Activated CD8-positive, alpha-beta T cell treated with anti-CD3 and anti-CD28 coated beads for 36 hours (primary cell): ENCODE measurements at regions of chrX and their contacts with region 1.

Region 1: GRCh38 chrX:43958529-43958928 is 14.7 kb downstream of the NDP start:
- DNase-seq: peak; percentile 5
- ATAC-seq: peak; percentile 47
- H3K4me3 Mint-ChIP-seq: no peak overlapping the region
- H3K27ac Mint-ChIP-seq: no peak overlapping the region
- H3K4me1 Mint-ChIP-seq: no peaks in the 10 kb centered on the region
- H3K27me3 Mint-ChIP-seq: peaks cover 1% of the 10 kb centered on the region
- CTCF ChIP-seq: peak; percentile 63

Region 2: GRCh38 chrX:43870758-43871419 is 87.6 kb before region 1 on chrX:
- CTCF ChIA-PET with region 1: no interaction called
- POLR2A ChIA-PET with region 1: no interaction called
- intact Hi-C with region 1: no loop called
- DNase-seq: peak; percentile 4
- ATAC-seq: no peak
- H3K4me3 Mint-ChIP-seq: no peak overlapping the region
- H3K27ac Mint-ChIP-seq: no peak overlapping the region
- H3K4me1 Mint-ChIP-seq: no peaks in the 10 kb centered on the region
- H3K27me3 Mint-ChIP-seq: peaks cover 5% of the 10 kb centered on the region
- CTCF ChIP-seq: no peak

Region 3: DNA sequence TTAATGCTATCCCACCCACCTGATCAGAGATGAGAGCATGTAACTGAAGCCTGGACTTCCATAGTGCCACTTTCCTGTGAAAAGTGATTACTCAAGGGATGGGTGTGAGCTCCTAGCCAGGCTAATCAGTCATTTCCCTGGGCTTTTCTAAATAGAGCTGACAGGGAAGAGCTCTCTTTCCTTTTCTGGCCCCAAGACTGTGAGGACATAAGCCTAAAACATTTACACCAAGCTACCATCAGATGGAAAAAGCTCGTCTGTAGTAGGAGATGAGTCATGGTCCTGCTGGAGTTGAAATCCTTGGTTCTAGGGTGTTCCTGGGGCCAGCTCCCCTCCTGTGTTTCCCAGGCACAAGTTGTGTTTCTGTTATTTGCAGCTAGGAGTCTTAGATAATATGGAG is 67.0 kb after region 1 on chrX:
- CTCF ChIA-PET with region 1: interaction called, 15 read pairs
- POLR2A ChIA-PET with region 1: no interaction called
- intact Hi-C with region 1: no loop called
- DNase-seq: no peak
- ATAC-seq: no peak
- H3K4me3 Mint-ChIP-seq: no peak overlapping the region
- H3K27ac Mint-ChIP-seq: no peak overlapping the region
- H3K4me1 Mint-ChIP-seq: peaks cover under 1% of the 10 kb centered on the region
- H3K27me3 Mint-ChIP-seq: no peaks in the 10 kb centered on the region
- CTCF ChIP-seq: no peak

Region 4: GRCh38 chrX:44244008-44244407 is 285.5 kb after region 1 on chrX:
- CTCF ChIA-PET with region 1: interaction called, 31 read pairs
- POLR2A ChIA-PET with region 1: no interaction called
- intact Hi-C with region 1: loop called (anchors 10 kb)
- DNase-seq: peak; percentile 5
- ATAC-seq: no peak
- H3K4me3 Mint-ChIP-seq: no peak overlapping the region
- H3K27ac Mint-ChIP-seq: no peak overlapping the region
- H3K4me1 Mint-ChIP-seq: peaks cover 17% of the 10 kb centered on the region
- H3K27me3 Mint-ChIP-seq: no peaks in the 10 kb centered on the region
- CTCF ChIP-seq: peak; percentile 44